Endothelial cell of umbilical vein (primary cell): ENCODE measurements at regions of chr22 and their contacts with region 1.

Region 1: GRCh38 chr22:30089655-30089974 is 9.4 kb downstream of the HORMAD2 start:
- DNase-seq: no peak
- H3K4me3 ChIP-seq: no peak overlapping the region
- H3K27ac ChIP-seq: no peak overlapping the region
- H3K4me1 ChIP-seq: no peaks in the 10 kb centered on the region
- H3K27me3 ChIP-seq: peaks cover 4 to 10% of the 10 kb centered on the region in 2 experiments
- CTCF ChIP-seq: no peak
- POLR2A ChIP-seq: no peak

Region 2: GRCh38 chr22:29394931-29395581 is 694.6 kb before region 1 on chr22:
- CTCF ChIA-PET with region 1: interaction called, 3 read pairs
- POLR2A ChIA-PET with region 1: no interaction called
- dilution Hi-C with region 1: no loop called
- intact Hi-C with region 1: loop called (anchors 2 kb)
- DNase-seq: peak; percentile 83
- H3K4me3 ChIP-seq: no peak overlapping the region
- H3K27ac ChIP-seq: no peak overlapping the region
- H3K4me1 ChIP-seq: no peaks in the 10 kb centered on the region
- H3K27me3 ChIP-seq: peaks cover 0 to 2% of the 10 kb centered on the region in 2 experiments
- CTCF ChIP-seq: peak; percentile 73 to 78
- POLR2A ChIP-seq: no peak

Region 3: DNA sequence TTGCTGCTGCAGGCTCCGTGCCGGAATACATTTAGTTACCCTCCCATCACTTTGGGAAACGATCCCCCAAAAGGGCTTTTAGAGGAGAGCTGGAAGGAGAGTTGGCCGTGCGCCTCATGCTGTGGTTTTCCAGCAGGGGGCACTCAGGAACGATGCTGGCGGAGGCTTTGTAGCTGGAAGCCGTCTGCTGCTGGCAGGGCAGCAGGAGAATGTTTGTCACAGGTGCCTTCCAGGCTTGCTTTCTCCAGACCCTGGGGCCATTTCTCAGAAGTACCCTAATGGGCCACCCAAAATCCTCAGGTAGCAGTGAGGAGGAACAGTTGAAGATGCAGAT is 399.8 kb before region 1 on chr22:
- CTCF ChIA-PET with region 1: interaction called, 92 read pairs
- POLR2A ChIA-PET with region 1: no interaction called
- dilution Hi-C with region 1: no loop called
- intact Hi-C with region 1: loop called (anchors 2 kb)
- DNase-seq: peak; percentile 43
- H3K4me3 ChIP-seq: no peak overlapping the region
- H3K27ac ChIP-seq: no peak overlapping the region
- H3K4me1 ChIP-seq: no peaks in the 10 kb centered on the region
- H3K27me3 ChIP-seq: no peaks in the 10 kb centered on the region
- CTCF ChIP-seq: peak; percentile 73 to 83
- POLR2A ChIP-seq: no peak

Region 4: DNA sequence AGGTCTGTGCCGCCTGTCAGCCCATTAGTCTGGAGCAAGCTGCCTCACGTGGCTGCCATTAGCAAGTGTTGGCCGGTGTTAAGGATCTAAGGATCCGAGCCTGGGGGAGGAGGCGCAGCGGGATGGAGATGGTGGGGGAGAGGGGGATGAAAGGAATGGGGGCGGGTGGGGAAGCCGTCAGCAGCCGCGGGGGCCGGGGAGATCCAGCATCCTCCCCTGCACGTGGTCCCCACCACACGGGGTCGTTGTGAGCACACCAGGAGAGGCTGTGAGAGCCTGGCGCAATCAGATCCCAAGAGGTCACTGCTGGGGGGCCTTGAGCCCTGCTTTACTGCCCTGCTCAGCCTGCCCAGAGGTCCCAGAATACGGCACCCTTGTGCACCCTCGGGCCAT is 362.5 kb before region 1 on chr22:
- CTCF ChIA-PET with region 1: interaction called, 18 read pairs
- POLR2A ChIA-PET with region 1: no interaction called
- dilution Hi-C with region 1: no loop called
- intact Hi-C with region 1: loop called (anchors 1 kb)
- DNase-seq: peak; percentile 10
- H3K4me3 ChIP-seq: no peak overlapping the region
- H3K27ac ChIP-seq: no peak overlapping the region
- H3K4me1 ChIP-seq: no peaks in the 10 kb centered on the region
- H3K27me3 ChIP-seq: no peaks in the 10 kb centered on the region
- CTCF ChIP-seq: peak in 1 of 2 donors; percentile 69
- POLR2A ChIP-seq: no peak

Region 5: DNA sequence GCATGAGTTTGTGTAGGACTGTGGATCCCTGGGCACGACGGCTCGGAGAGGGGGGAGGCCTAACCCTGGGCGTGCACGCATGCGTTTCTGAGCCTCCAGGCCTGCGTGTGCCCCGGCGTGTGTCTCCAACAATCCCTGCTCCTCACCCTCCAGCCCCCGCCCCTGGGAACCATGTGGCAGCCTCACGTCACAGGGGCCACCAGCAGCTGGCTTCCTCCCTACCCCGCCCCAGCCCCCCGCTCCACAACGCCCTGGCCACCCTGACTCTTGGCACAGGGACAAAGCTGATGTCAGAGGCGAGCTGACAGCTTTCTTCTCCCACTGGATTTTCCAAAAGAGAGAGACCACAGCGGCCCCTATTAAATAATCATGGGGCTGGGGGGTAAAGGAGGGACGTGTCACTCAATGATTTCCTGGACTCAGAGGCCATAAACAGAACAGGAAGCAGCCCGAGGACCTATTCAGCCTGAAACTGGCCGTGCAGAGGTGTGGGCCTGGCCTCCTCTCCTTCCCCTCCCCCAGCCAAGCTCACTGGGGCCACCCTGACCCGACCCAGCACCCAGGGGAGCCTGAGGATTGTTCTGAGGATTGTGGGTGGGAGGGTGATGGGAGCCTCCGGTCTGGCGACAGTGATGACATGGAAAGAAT is 163.7 kb after region 1 on chr22:
- CTCF ChIA-PET with region 1: interaction called, 15 read pairs
- POLR2A ChIA-PET with region 1: no interaction called
- dilution Hi-C with region 1: no loop called
- intact Hi-C with region 1: no loop called
- DNase-seq: no peak
- H3K4me3 ChIP-seq: no peak overlapping the region
- H3K27ac ChIP-seq: no peak overlapping the region
- H3K4me1 ChIP-seq: peaks cover 5% of the 10 kb centered on the region
- H3K27me3 ChIP-seq: peaks cover 0 to 4% of the 10 kb centered on the region in 2 experiments
- CTCF ChIP-seq: no peak
- POLR2A ChIP-seq: no peak

Region 6: DNA sequence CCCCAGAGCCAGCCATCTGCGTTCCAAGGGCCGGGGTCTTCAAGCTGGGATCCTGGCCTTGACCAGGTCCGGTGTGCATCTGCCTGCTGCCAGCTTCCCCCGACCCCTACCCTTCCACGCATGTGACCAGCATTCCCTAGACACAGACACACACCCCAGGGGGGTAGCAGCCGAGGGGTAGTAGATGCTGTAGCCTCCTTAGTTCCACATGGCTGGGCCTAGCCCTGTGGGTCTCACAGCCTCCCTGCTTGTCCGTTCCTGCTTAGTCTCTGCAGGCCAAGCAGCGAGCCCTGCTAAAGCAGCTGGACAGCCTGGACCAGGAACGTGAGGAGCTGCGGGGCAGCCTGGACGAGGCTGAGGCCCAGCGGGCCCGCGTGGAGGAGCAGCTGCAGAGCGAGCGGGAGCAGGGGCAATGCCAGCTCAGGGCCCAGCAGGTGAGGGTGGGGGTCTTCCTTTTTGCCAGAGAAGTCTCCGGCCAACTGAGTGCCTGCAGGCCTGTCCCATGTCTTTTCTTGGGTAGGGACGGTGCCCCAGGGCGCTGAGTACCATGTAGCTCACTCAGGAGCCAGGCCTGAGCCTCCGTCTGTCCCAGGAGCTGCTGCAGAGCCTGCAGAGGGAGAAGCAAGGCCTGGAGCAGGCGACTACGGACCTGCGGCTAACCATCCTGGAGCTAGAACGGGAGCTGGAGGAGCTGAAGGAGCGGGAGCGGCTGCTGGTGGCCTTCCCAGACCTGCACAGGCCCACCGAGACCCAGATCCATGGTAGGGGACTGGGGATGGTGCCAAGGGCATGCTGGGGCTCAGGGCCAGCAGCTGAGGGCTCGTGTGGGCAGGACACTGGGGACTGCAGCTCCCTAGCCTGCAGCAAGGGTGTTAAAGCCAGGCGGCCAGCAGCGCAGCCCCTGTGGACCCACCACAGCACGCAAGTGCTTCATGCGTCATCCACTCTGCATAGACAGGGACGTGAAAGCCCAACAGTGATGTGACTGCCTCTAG is 284.0 kb after region 1 on chr22:
- CTCF ChIA-PET with region 1: no interaction called
- POLR2A ChIA-PET with region 1: no interaction called
- dilution Hi-C with region 1: no loop called
- intact Hi-C with region 1: no loop called
- DNase-seq: no peak
- H3K4me3 ChIP-seq: no peak overlapping the region
- H3K27ac ChIP-seq: no peak overlapping the region
- H3K4me1 ChIP-seq: no peaks in the 10 kb centered on the region
- H3K27me3 ChIP-seq: no peaks in the 10 kb centered on the region
- CTCF ChIP-seq: no peak
- POLR2A ChIP-seq: no peak